Upper lobe of right lung (tissue), 1 donor: ENCODE measurements at regions of chr7 and their contacts with region 1.

Region 1: GRCh38 chr7:50467817-50468610 is 17.9 kb upstream of the FIGNL1 start:
- DNase-seq: peak; percentile 85
- ATAC-seq: peak; percentile 94
- H3K4me3 ChIP-seq: no peak overlapping the region
- H3K27ac ChIP-seq: no peak overlapping the region
- H3K4me1 ChIP-seq: peaks cover 3% of the 10 kb centered on the region
- H3K27me3 ChIP-seq: no peaks in the 10 kb centered on the region
- CTCF ChIP-seq: peak; percentile 86

Region 2: GRCh38 chr7:50507898-50508470 is 40.0 kb after region 1 on chr7:
- intact Hi-C with region 1: no loop called
- DNase-seq: no peak
- ATAC-seq: no peak
- H3K4me3 ChIP-seq: no peak overlapping the region
- H3K27ac ChIP-seq: no peak overlapping the region
- H3K4me1 ChIP-seq: no peaks in the 10 kb centered on the region
- H3K27me3 ChIP-seq: no peaks in the 10 kb centered on the region
- CTCF ChIP-seq: no peak

Region 3: GRCh38 chr7:50795831-50796230 is 327.8 kb after region 1 on chr7:
- intact Hi-C with region 1: no loop called
- DNase-seq: no peak
- ATAC-seq: no peak
- H3K4me3 ChIP-seq: no peak overlapping the region
- H3K27ac ChIP-seq: no peak overlapping the region
- H3K4me1 ChIP-seq: peaks cover 17% of the 10 kb centered on the region
- H3K27me3 ChIP-seq: no peaks in the 10 kb centered on the region
- CTCF ChIP-seq: no peak

Region 4: GRCh38 chr7:51154201-51154600 is 686.2 kb after region 1 on chr7:
- intact Hi-C with region 1: loop called (anchors 10 kb)
- DNase-seq: no peak
- ATAC-seq: no peak
- H3K4me3 ChIP-seq: no peak overlapping the region
- H3K27ac ChIP-seq: no peak overlapping the region
- H3K4me1 ChIP-seq: no peaks in the 10 kb centered on the region
- H3K27me3 ChIP-seq: no peaks in the 10 kb centered on the region
- CTCF ChIP-seq: no peak